K562 (cell line): ENCODE measurements at regions of chr19 and their contacts with region 1.

Region 1: GRCh38 chr19:18281082-18282020 is at the start of gene JUND:
- DNase-seq: peak; percentile 84 to 99 (median 92)
- ATAC-seq: peak; percentile 77
- H3K4me3 ChIP-seq: peak within 1 kb of the TSS; percentile 100
- H3K27ac ChIP-seq: peak within 1 kb of the TSS; percentile 100
- H3K4me1 ChIP-seq: peaks cover 21 to 55% of the 10 kb centered on the region in 2 experiments
- H3K27me3 ChIP-seq: no peaks in the 10 kb centered on the region
- CTCF ChIP-seq: peak in 1 of 3 experiments; percentile 14; a peak in 1 of 6 replicates
- EP300 ChIP-seq: 0 out of 2 replicates have a peak, but pooled peaks have one; percentile 36
- POLR2A ChIP-seq: peak; percentile 26
- RAD21 ChIP-seq: 0 out of 4 replicates have a peak, but pooled peaks of 1 of the 2 experiments have one; percentile 19
- polyA plus RNA-seq, gene JUND: 6.4 to 11.8 TPM

Region 2: GRCh38 chr19:17944301-17944700 is 337.1 kb before region 1 on chr19:
- CTCF ChIA-PET with region 1: no interaction called
- POLR2A ChIA-PET with region 1: no interaction called
- in situ Hi-C with region 1: no loop called
- intact Hi-C with region 1: no loop called
- DNase-seq: no peak
- ATAC-seq: no peak
- H3K4me3 ChIP-seq: no peak overlapping the region
- H3K27ac ChIP-seq: no peak overlapping the region
- H3K4me1 ChIP-seq: peaks cover 38 to 60% of the 10 kb centered on the region in 2 experiments
- H3K27me3 ChIP-seq: no peaks in the 10 kb centered on the region
- CTCF ChIP-seq: no peak
- EP300 ChIP-seq: no peak
- POLR2A ChIP-seq: no peak
- RAD21 ChIP-seq: no peak

Region 3: DNA sequence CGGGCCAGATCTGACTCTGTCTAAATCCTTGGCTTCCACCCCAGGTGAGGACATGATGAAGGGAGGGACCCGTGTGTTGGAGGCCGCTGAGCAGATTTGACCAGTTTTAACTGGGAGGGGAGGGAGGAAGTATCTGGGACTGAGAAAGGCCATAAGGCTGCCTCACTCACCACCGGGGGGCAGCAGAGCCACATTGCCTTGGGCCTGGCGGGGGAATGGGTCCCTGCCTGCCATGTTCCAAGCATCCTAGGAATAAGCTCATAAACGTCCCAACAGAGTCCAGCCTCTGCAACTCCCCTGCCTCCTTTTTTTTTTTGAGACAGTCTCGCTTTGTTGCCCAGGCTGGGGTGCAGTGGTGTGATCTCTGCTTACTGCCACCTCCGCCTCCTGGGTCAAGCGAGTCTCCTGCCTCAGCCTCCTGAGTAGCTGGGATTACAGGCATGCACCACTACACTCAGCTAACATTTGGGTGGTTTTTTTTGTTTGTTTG is 168.3 kb before region 1 on chr19:
- CTCF ChIA-PET with region 1: no interaction called
- POLR2A ChIA-PET with region 1: no interaction called
- in situ Hi-C with region 1: no loop called
- intact Hi-C with region 1: no loop called
- DNase-seq: peak; percentile 74 to 91 (median 78)
- ATAC-seq: peak; percentile 83
- H3K4me3 ChIP-seq: no peak overlapping the region
- H3K27ac ChIP-seq: no peak overlapping the region
- H3K4me1 ChIP-seq: peaks cover 18 to 32% of the 10 kb centered on the region in 2 experiments
- H3K27me3 ChIP-seq: no peaks in the 10 kb centered on the region
- CTCF ChIP-seq: peak; percentile 95 to 96 (median 95)
- EP300 ChIP-seq: no peak
- POLR2A ChIP-seq: no peak
- RAD21 ChIP-seq: peak; percentile 72 to 91

Region 4: DNA sequence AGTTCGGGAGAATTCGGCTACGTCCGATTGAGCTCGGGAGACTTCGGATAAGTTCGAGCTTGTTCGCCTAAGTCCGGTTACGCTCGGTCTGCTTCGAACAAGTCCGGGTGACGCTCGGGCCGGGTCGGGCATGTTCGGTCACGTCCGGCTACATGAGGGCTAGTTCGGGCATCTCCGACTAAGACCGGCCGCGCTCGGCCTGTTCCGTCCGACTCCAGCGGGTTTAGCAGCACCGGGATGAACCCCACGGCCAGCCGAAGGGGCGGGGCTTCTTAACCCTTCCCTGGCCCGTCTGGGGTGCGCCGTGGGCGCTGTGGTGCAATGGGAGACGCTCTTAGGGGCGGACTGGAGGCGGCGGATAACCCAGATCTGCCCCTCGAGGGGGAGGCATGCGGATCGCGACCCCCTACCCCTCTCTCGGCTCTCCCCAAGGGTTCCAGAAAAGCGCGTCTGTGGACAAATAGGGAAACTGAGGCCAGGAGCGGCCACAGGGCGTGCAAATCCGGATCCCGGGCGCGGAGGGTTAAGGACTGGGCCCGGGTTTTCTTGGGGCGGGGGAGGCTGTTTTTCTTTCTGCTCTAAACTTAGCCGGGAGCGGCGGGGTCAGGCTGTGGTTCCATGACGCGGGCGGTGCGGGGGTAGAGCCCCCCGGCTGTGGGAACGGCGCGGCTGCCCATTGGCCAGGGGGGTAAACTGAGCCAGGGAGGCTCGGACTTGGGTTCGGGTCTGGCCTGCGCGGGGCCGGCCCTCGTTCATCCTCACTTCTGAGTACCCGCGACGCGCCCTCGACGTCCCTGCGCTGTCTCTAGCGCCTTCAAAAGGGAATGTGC is 56.6 kb before region 1 on chr19:
- CTCF ChIA-PET with region 1: no interaction called
- POLR2A ChIA-PET with region 1: interaction called, 23 read pairs
- in situ Hi-C with region 1: no loop called
- intact Hi-C with region 1: no loop called
- DNase-seq: peak; percentile 94 to 99 (median 96)
- ATAC-seq: peak; percentile 97
- H3K4me3 ChIP-seq: peak overlapping the region; percentile 48
- H3K27ac ChIP-seq: peak overlapping the region; percentile 84
- H3K4me1 ChIP-seq: peaks cover 23 to 61% of the 10 kb centered on the region in 2 experiments; a peak in 4 of 5 replicates
- H3K27me3 ChIP-seq: no peaks in the 10 kb centered on the region; a peak in 1 of 5 replicates
- CTCF ChIP-seq: no peak
- EP300 ChIP-seq: no peak
- POLR2A ChIP-seq: no peak
- RAD21 ChIP-seq: no peak

Region 5: DNA sequence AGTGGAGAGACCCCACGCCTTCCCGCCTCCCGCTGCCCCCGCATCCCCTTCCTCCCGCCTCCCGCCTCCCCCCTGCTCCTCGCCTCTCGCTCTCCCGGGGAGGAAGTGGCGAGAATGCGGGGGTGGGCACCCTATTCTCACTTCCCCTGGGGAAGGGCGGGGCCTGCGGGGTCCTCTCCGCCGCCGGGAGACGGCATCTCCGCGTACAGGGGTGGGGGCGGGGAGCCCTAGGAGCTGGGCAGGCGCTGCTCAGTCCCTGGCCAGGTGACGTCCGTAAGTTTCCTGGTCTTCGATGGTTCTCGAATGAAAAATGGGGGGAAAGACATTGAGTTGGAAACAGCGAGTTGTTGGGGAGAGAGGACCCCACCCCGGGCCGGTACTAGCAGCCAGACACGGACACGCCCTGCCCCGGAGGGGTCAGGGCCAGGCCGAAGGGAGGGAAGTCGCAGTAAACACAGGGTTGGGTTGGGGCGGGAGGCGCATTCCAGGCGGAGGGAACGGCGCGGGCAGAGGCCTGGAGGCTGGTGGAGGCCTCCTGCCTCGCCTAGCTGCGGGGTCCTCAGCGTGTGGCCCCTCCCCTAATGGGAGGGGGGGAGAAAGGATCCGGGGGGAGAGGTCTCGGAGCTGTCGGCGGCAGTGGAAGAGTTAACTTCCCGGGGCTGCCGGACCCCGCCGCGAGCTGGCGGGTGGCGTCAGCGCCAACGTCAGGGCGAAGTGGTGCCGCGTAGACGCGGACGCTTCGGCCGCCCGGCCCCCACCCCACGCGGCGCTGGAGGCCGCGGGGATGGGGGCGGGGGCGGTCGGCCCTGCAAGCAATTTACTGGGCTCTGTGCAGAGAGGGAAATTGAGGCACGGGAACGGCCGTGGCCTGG is 10.5 kb after region 1 on chr19:
- CTCF ChIA-PET with region 1: interaction called, 3 read pairs
- POLR2A ChIA-PET with region 1: interaction called, 113 read pairs
- in situ Hi-C with region 1: no loop called
- intact Hi-C with region 1: no loop called
- DNase-seq: peak; percentile 88 to 97 (median 92)
- ATAC-seq: peak; percentile 81
- H3K4me3 ChIP-seq: peak overlapping the region; percentile 64
- H3K27ac ChIP-seq: peak overlapping the region; percentile 98
- H3K4me1 ChIP-seq: peaks cover 31 to 64% of the 10 kb centered on the region in 2 experiments
- H3K27me3 ChIP-seq: no peaks in the 10 kb centered on the region
- CTCF ChIP-seq: no peak
- EP300 ChIP-seq: no peak
- POLR2A ChIP-seq: peak; percentile 79
- RAD21 ChIP-seq: peak in 1 of 2 experiments; percentile 4; a peak in 2 of 4 replicates

Region 6: GRCh38 chr19:18322759-18323460 is 41.6 kb after region 1 on chr19 and contains the start of gene LSM4:
- CTCF ChIA-PET with region 1: interaction called, 11 read pairs
- POLR2A ChIA-PET with region 1: interaction called, 122 read pairs
- in situ Hi-C with region 1: loop called (anchors 5 kb)
- intact Hi-C with region 1: loop called (anchors 1 kb)
- DNase-seq: peak; percentile 97 to 100 (median 98)
- ATAC-seq: peak; percentile 96
- H3K4me3 ChIP-seq: peak within 1 kb of the TSS; percentile 69
- H3K27ac ChIP-seq: peak within 1 kb of the TSS; percentile 90
- H3K4me1 ChIP-seq: peaks cover 45 to 58% of the 10 kb centered on the region in 2 experiments
- H3K27me3 ChIP-seq: no peaks in the 10 kb centered on the region
- CTCF ChIP-seq: peak; percentile 42 to 69 (median 63); a peak in 4 of 6 replicates
- EP300 ChIP-seq: no peak
- POLR2A ChIP-seq: peak; percentile 91
- RAD21 ChIP-seq: peak in 1 of 2 experiments; percentile 56; a peak in 3 of 4 replicates
- polyA plus RNA-seq, gene LSM4: 11.9 to 29.7 TPM

Region 7: GRCh38 chr19:18373892-18374629 is 92.7 kb after region 1 on chr19:
- CTCF ChIA-PET with region 1: no interaction called
- POLR2A ChIA-PET with region 1: interaction called, 14 read pairs
- in situ Hi-C with region 1: no loop called
- intact Hi-C with region 1: no loop called
- DNase-seq: peak; percentile 96 to 99 (median 96)
- ATAC-seq: peak; percentile 93
- H3K4me3 ChIP-seq: peak overlapping the region; percentile 1; the same call in 1 of the 2 replicates
- H3K27ac ChIP-seq: peak overlapping the region; percentile 97
- H3K4me1 ChIP-seq: peaks cover 59 to 72% of the 10 kb centered on the region in 2 experiments
- H3K27me3 ChIP-seq: no peaks in the 10 kb centered on the region
- CTCF ChIP-seq: no peak
- EP300 ChIP-seq: peak; percentile 92
- POLR2A ChIP-seq: peak; percentile 84
- RAD21 ChIP-seq: peak in 1 of 2 experiments; percentile 9; a peak in 1 of 4 replicates

Region 8: DNA sequence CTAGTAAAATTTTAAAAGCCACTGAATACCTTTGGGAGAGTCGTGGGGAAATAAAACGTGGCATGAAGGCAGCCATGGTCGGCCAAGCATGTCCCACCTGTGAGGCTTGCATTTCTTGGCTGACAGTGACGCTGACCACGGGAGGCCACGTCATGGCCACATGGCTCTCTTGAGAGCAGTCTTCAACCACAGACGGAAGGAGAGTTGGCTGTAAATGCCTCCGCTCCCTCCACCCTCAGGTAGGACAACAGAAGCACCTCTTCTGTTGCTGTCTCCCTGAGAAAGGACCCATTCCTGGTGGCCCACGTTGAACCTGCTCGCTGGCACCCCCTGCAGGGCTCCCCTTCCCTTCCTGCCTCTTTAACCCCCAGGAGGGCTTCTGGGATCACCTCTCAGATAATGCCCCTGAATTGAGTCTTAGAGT is 126.7 kb after region 1 on chr19:
- CTCF ChIA-PET with region 1: no interaction called
- POLR2A ChIA-PET with region 1: interaction called, 34 read pairs
- in situ Hi-C with region 1: no loop called
- intact Hi-C with region 1: no loop called
- DNase-seq: peak; percentile 63 to 81 (median 72)
- ATAC-seq: peak; percentile 86
- H3K4me3 ChIP-seq: no peak overlapping the region
- H3K27ac ChIP-seq: peak overlapping the region; percentile 39; the same call in 1 of the 3 replicates
- H3K4me1 ChIP-seq: peaks cover 3 to 25% of the 10 kb centered on the region in 2 experiments; a peak in 3 of 5 replicates
- H3K27me3 ChIP-seq: no peaks in the 10 kb centered on the region
- CTCF ChIP-seq: peak; percentile 82 to 89 (median 86)
- EP300 ChIP-seq: no peak
- POLR2A ChIP-seq: no peak
- RAD21 ChIP-seq: peak; percentile 55 to 89

Region 9: DNA sequence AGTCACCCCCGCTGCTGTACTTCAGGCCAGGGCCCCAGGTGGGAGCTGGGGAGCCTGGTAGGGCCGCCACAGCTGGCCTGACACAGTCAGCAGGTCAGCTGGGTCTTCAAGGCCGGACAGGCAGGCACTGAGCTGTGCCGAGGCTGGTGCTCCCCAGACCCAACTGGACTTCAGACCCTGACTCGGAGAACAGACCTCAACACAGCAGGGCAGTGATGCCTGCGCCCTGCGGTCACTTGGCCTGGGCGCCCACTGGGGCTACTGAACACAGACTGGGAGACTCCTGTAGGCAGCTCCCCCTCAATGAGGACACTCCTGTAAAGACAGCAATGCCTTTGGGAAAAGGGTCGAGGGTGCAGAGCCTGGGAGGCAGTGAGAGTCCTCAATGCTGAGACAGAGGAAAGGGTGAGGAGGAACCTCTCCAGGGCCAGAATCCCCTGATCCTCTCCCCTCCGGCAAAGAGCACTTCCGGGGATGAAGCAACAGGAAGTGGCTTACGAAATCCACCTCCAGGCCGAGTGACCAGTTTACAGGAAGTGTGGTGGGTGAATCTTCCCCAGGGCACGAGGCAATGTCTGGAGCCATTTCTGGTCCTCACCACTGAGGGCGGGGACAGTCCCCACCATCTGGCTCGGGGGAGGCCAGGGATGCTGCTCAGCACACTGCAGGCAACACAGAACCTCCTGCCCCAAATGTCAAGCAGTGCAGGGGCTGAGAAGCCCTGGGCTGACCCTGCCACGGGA is 197.4 kb after region 1 on chr19:
- CTCF ChIA-PET with region 1: no interaction called
- POLR2A ChIA-PET with region 1: no interaction called
- in situ Hi-C with region 1: no loop called
- intact Hi-C with region 1: no loop called
- DNase-seq: peak in 2 of 4 experiments; percentile 69 to 71
- ATAC-seq: peak; percentile 82
- H3K4me3 ChIP-seq: no peak overlapping the region
- H3K27ac ChIP-seq: peak overlapping the region; percentile 51; the same call in 2 of the 3 replicates
- H3K4me1 ChIP-seq: peaks cover 42 to 60% of the 10 kb centered on the region in 2 experiments
- H3K27me3 ChIP-seq: no peaks in the 10 kb centered on the region
- CTCF ChIP-seq: no peak
- EP300 ChIP-seq: peak; percentile 56
- POLR2A ChIP-seq: no peak
- RAD21 ChIP-seq: 0 out of 4 replicates have a peak, but pooled peaks of 1 of the 2 experiments have one; percentile 6